HepG2 (cell line): ENCODE measurements at regions of chr10 and their contacts with region 1.

Region 1: DNA sequence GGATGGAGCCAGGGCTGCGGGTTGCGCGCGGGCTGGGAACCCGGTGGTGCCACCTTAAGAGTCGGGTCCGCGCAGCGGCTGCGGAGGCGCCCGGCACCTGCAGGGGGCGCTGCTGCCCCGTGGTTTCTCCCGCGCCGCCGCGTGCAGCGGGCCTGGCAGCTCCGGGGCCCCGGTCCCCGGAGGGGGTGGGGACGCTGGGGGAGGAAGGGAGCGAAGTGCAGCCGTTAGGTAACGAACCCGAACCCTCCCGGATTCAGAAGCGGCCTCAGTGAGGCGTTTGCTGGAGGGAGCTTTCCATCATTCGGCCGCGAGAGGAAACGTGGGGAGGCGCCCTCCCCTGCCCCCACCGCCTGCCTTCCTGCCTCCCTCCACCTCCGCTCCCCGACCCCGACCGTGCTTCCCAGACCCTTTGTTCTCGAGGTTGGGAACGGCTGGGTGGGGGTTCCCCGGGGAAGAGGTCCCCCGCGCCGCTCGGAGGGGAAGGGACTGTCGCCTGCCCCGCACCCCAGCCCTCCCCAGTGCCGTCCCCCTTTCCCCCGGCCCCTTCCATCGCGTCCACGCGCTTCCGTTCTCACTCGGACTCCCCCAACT is 29.6 kb downstream of the SKIDA1 start:
- DNase-seq: peak; percentile 95
- ATAC-seq: peak; percentile 83
- H3K4me3 ChIP-seq: peak overlapping the region; percentile 82 to 95 (median 83)
- H3K27ac ChIP-seq: peak overlapping the region; percentile 98
- H3K4me1 ChIP-seq: peaks cover 38% of the 10 kb centered on the region
- H3K27me3 ChIP-seq: no peaks in the 10 kb centered on the region; a peak in 1 of 5 replicates
- CTCF ChIP-seq: peak; percentile 96
- EP300 ChIP-seq: peak; percentile 86 to 92
- POLR2A ChIP-seq: peak in 1 of 2 experiments; percentile 98; a peak in 2 of 4 replicates
- RAD21 ChIP-seq: peak; percentile 100

Region 2: GRCh38 chr10:21278491-21279239 is 217.2 kb before region 1 on chr10:
- CTCF ChIA-PET with region 1: interaction called, 11 read pairs
- POLR2A ChIA-PET with region 1: no interaction called
- in situ Hi-C with region 1: loop called (anchors 25 kb)
- intact Hi-C with region 1: loop called (anchors 1 kb)
- DNase-seq: peak; percentile 87
- ATAC-seq: peak; percentile 99
- H3K4me3 ChIP-seq: no peak overlapping the region
- H3K27ac ChIP-seq: no peak overlapping the region
- H3K4me1 ChIP-seq: no peaks in the 10 kb centered on the region
- H3K27me3 ChIP-seq: no peaks in the 10 kb centered on the region; a peak in 1 of 5 replicates
- CTCF ChIP-seq: peak; percentile 95
- EP300 ChIP-seq: no peak
- POLR2A ChIP-seq: no peak
- RAD21 ChIP-seq: peak; percentile 92

Region 3: GRCh38 chr10:21399392-21400035 is 96.3 kb before region 1 on chr10:
- CTCF ChIA-PET with region 1: no interaction called
- POLR2A ChIA-PET with region 1: no interaction called
- in situ Hi-C with region 1: no loop called
- intact Hi-C with region 1: no loop called
- DNase-seq: peak; percentile 66
- ATAC-seq: no peak; the same call in 2 of the 3 replicates
- H3K4me3 ChIP-seq: no peak overlapping the region
- H3K27ac ChIP-seq: no peak overlapping the region
- H3K4me1 ChIP-seq: no peaks in the 10 kb centered on the region
- H3K27me3 ChIP-seq: no peaks in the 10 kb centered on the region
- CTCF ChIP-seq: no peak
- EP300 ChIP-seq: no peak
- POLR2A ChIP-seq: no peak
- RAD21 ChIP-seq: no peak

Region 4: DNA sequence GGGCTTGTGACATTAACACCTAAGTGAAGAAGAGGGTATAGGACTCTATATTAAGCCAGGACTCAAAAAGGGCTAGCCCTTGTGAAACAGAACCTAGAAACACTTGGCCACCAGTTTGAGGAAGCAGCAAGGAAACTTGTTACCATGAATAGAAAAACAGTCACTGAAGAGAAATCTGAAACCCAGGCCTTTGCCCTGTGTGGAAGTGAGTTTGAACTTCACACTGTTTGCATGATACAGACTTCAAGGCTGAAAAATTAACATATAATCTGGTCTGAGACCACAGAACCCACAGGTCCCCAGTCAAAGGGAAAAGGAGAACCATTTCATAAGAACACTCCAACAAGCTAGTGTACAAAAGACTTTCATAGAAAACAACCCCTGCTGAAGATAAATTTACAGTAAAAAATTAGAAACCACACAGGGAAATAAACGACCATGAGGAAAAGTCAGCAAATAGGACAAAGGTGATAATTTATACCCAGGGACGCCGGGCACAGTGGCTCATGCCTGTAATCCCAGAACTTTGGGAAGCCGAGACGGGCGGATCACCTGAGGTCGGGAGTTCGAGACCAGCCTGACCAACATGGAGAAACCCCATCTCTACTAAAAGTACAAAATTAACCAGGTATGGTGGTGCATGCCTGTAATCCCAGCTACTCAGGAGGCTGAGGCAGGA is 46.4 kb before region 1 on chr10:
- CTCF ChIA-PET with region 1: no interaction called
- POLR2A ChIA-PET with region 1: no interaction called
- in situ Hi-C with region 1: no loop called
- intact Hi-C with region 1: no loop called
- DNase-seq: no peak
- ATAC-seq: peak; percentile 56
- H3K4me3 ChIP-seq: no peak overlapping the region
- H3K27ac ChIP-seq: no peak overlapping the region
- H3K4me1 ChIP-seq: peaks cover 6% of the 10 kb centered on the region; the same call in 1 of the 2 replicates
- H3K27me3 ChIP-seq: no peaks in the 10 kb centered on the region; a peak in 1 of 5 replicates
- CTCF ChIP-seq: no peak
- EP300 ChIP-seq: no peak
- POLR2A ChIP-seq: no peak
- RAD21 ChIP-seq: no peak

Region 5: GRCh38 chr10:21525367-21526183 is 29.7 kb after region 1 on chr10 and contains the start of gene SKIDA1:
- CTCF ChIA-PET with region 1: interaction called, 6 read pairs
- POLR2A ChIA-PET with region 1: interaction called, 294 read pairs
- in situ Hi-C with region 1: no loop called
- intact Hi-C with region 1: loop called (anchors 2 kb)
- DNase-seq: peak; percentile 92
- ATAC-seq: peak; percentile 74
- H3K4me3 ChIP-seq: peak within 1 kb of the TSS; percentile 51 to 79 (median 77)
- H3K27ac ChIP-seq: peak within 1 kb of the TSS; percentile 95
- H3K4me1 ChIP-seq: peaks cover 38% of the 10 kb centered on the region
- H3K27me3 ChIP-seq: no peaks in the 10 kb centered on the region
- CTCF ChIP-seq: no peak; the same call in 1 of the 2 replicates
- EP300 ChIP-seq: peak; percentile 13 to 45; a peak in 2 of 4 replicates
- POLR2A ChIP-seq: peak in 1 of 2 experiments; percentile 78; a peak in 2 of 4 replicates
- RAD21 ChIP-seq: peak; percentile 63; the same call in 1 of the 2 replicates
- total RNA-seq, gene SKIDA1: 1.4 and 1.5 TPM in 2 replicates

Region 6: GRCh38 chr10:21572578-21572977 is 76.7 kb after region 1 on chr10:
- CTCF ChIA-PET with region 1: no interaction called
- POLR2A ChIA-PET with region 1: interaction called, 5 read pairs
- in situ Hi-C with region 1: no loop called
- intact Hi-C with region 1: loop called (anchors 2 kb)
- DNase-seq: no peak
- ATAC-seq: no peak
- H3K4me3 ChIP-seq: no peak overlapping the region
- H3K27ac ChIP-seq: peak overlapping the region; percentile 39
- H3K4me1 ChIP-seq: peaks cover 69% of the 10 kb centered on the region
- H3K27me3 ChIP-seq: no peaks in the 10 kb centered on the region
- CTCF ChIP-seq: no peak
- EP300 ChIP-seq: no peak
- POLR2A ChIP-seq: no peak
- RAD21 ChIP-seq: no peak

Region 7: DNA sequence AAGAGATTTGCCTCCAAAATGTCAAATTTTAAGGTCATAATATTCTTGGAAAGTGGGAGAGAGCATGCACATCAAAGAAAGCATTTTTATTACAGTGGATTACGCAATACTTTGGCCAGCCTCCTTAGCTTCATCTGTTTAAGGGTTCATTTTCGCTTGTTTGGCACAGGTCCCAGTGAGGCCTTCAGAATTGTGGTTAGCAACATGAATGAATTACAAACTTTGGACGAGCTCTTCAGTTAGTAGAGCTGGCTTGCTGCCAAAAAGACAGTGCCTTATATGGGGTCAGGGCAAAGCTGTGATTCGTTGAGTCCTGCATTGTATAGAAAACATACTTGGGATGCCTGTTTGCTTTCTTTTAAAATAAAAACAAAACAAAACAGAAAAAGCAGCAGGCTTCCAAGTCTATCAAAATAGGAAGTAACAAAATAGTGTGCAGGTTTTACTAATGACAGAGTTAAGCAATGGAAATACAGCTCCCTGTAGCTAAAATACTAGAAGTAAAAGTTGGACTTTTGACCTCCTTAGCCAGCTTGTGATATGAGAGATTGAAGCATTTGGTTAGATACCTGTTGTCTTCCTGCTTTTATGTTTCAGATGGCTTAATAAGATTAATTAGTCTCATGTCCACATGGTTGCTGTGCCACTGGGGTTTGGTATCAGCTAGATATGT is 229.0 kb after region 1 on chr10:
- CTCF ChIA-PET with region 1: interaction called, 3 read pairs
- POLR2A ChIA-PET with region 1: interaction called, 18 read pairs
- in situ Hi-C with region 1: no loop called
- intact Hi-C with region 1: no loop called
- DNase-seq: peak; percentile 98
- ATAC-seq: peak; percentile 97
- H3K4me3 ChIP-seq: no peak overlapping the region
- H3K27ac ChIP-seq: peak overlapping the region; percentile 49
- H3K4me1 ChIP-seq: peaks cover 36% of the 10 kb centered on the region
- H3K27me3 ChIP-seq: no peaks in the 10 kb centered on the region
- CTCF ChIP-seq: no peak
- EP300 ChIP-seq: peak in 1 of 2 experiments; percentile 68; a peak in 2 of 4 replicates
- POLR2A ChIP-seq: no peak
- RAD21 ChIP-seq: no peak

Region 8: GRCh38 chr10:21964983-21965688 is 469.3 kb after region 1 on chr10:
- CTCF ChIA-PET with region 1: no interaction called
- POLR2A ChIA-PET with region 1: no interaction called
- in situ Hi-C with region 1: no loop called
- intact Hi-C with region 1: no loop called
- DNase-seq: no peak
- ATAC-seq: no peak
- H3K4me3 ChIP-seq: no peak overlapping the region
- H3K27ac ChIP-seq: no peak overlapping the region
- H3K4me1 ChIP-seq: no peaks in the 10 kb centered on the region
- H3K27me3 ChIP-seq: no peaks in the 10 kb centered on the region
- CTCF ChIP-seq: no peak
- EP300 ChIP-seq: no peak
- POLR2A ChIP-seq: no peak
- RAD21 ChIP-seq: no peak